Activated CD8-positive, alpha-beta T cell treated with anti-CD3 and anti-CD28 coated beads for 36 hours (primary cell): ENCODE measurements at regions of chr15 and their contacts with region 1.

Region 1: GRCh38 chr15:89358755-89359439 is 24.3 kb upstream of the POLG start:
- DNase-seq: peak; percentile 85
- ATAC-seq: peak; percentile 93
- H3K4me3 Mint-ChIP-seq: peak overlapping the region; percentile 75
- H3K27ac Mint-ChIP-seq: no peak overlapping the region
- H3K4me1 Mint-ChIP-seq: peaks cover 3% of the 10 kb centered on the region
- H3K27me3 Mint-ChIP-seq: peaks cover 75% of the 10 kb centered on the region
- CTCF ChIP-seq: peak; percentile 97

Region 2: DNA sequence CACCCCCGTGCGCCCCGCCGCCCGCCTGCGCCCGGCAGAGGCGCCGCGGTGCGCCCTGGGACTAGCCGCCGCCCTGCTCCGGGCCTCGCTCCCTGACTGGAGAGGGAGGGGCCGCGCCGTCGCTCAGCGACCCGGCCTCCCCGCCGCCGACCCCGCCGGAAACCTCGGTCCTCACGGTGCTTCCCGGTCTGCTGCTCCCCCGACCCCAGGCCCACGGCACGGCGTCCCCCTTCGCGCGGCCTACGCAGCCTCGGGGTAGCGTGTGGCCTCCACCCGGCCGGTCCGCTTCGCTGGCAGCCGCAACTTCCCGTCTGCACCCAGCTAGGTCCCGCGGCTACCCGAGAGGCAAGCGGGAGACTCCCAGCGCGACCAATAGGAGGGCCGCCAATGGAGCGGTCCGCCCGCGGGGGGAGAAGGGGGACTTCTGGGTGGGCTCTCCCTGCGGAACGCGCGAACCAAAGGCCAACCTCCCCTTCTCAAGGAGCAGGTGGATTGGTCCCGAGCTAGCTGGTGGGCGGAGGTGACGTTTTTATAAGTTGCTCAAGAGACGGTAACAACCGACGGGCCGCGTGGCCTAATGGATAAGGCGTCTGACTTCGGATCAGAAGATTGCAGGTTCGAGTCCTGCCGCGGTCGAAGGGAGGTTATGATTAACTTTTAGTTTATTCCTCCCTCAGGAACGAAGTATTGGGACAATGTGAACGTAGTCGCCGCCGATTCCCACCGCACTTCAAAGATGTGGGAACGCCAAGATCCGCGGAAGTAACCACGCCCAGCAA is 24.2 kb before region 1 on chr15 and contains the start of gene POLG:
- CTCF ChIA-PET with region 1: interaction called, 116 read pairs
- POLR2A ChIA-PET with region 1: interaction called, 3 read pairs
- intact Hi-C with region 1: no loop called
- DNase-seq: peak; percentile 98
- ATAC-seq: peak; percentile 93
- H3K4me3 Mint-ChIP-seq: peak within 1 kb of the TSS; percentile 78
- H3K27ac Mint-ChIP-seq: peak within 1 kb of the TSS; percentile 80
- H3K4me1 Mint-ChIP-seq: peaks cover 60% of the 10 kb centered on the region
- H3K27me3 Mint-ChIP-seq: peaks cover 2% of the 10 kb centered on the region
- CTCF ChIP-seq: no peak
- total RNA-seq, gene POLG: 101 to 106 TPM

Region 3: GRCh38 chr15:89383365-89384175 is 24.7 kb after region 1 on chr15:
- CTCF ChIA-PET with region 1: interaction called, 165 read pairs
- POLR2A ChIA-PET with region 1: interaction called, 8 read pairs
- intact Hi-C with region 1: no loop called
- DNase-seq: no peak
- ATAC-seq: no peak
- H3K4me3 Mint-ChIP-seq: no peak overlapping the region
- H3K27ac Mint-ChIP-seq: no peak overlapping the region
- H3K4me1 Mint-ChIP-seq: peaks cover 2% of the 10 kb centered on the region
- H3K27me3 Mint-ChIP-seq: peaks cover 31% of the 10 kb centered on the region
- CTCF ChIP-seq: no peak

Region 4: GRCh38 chr15:89430530-89431341 is 71.8 kb after region 1 on chr15:
- CTCF ChIA-PET with region 1: interaction called, 185 read pairs
- POLR2A ChIA-PET with region 1: interaction called, 3 read pairs
- intact Hi-C with region 1: loop called (anchors 2 kb)
- DNase-seq: peak; percentile 93
- ATAC-seq: peak; percentile 99
- H3K4me3 Mint-ChIP-seq: peak overlapping the region; percentile 72
- H3K27ac Mint-ChIP-seq: peak overlapping the region; percentile 27
- H3K4me1 Mint-ChIP-seq: peaks cover 8% of the 10 kb centered on the region
- H3K27me3 Mint-ChIP-seq: peaks cover 32% of the 10 kb centered on the region
- CTCF ChIP-seq: peak; percentile 96

Region 5: DNA sequence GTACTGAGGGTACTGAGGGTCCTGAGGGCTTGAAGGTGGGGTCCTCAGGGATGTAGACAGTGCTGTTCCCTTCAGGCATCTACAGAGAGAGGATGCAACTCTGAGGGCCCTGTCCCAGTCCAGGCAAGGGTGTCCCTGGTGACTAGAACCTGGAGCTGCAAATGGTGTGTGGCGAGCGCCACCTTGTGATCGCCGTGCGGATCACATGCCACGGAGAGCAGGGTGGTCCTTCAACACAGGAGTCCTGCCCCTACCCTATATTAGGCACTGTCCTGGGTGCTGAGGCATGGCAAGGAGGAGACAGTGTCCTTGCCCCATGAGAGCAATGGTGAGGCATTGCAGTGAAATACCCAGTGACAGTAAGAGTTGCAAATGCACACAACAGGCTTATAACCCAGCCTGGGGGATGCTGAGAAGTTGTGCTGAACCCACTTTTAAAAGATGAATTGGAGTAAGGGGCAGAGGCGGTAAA is 113.9 kb after region 1 on chr15:
- CTCF ChIA-PET with region 1: interaction called, 50 read pairs
- POLR2A ChIA-PET with region 1: no interaction called
- intact Hi-C with region 1: loop called (anchors 5 kb)
- DNase-seq: peak; percentile 71
- ATAC-seq: peak; percentile 85
- H3K4me3 Mint-ChIP-seq: no peak overlapping the region
- H3K27ac Mint-ChIP-seq: no peak overlapping the region
- H3K4me1 Mint-ChIP-seq: peaks cover 3% of the 10 kb centered on the region
- H3K27me3 Mint-ChIP-seq: peaks cover 10% of the 10 kb centered on the region
- CTCF ChIP-seq: peak; percentile 87

Region 6: DNA sequence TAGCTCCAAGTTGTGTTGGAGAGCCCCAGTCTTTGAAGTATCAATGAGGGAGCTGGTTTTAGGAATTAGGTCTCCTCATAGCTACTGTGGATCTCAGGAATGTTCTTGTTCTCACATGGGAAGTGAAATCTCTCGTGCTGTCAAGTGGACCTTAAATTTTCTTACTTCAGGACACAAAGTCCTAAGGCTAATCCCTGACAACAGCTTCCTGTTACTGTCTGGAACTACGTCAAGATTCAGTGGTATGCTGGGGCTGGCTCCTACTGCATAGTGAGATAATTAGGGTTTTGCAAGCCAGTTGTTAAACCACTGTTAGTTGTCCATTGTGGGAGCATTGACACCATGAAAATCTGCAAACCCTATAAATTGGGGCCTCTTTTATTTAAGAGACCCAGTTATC is 369.4 kb after region 1 on chr15:
- CTCF ChIA-PET with region 1: no interaction called
- POLR2A ChIA-PET with region 1: no interaction called
- intact Hi-C with region 1: no loop called
- DNase-seq: no peak
- ATAC-seq: no peak
- H3K4me3 Mint-ChIP-seq: no peak overlapping the region
- H3K27ac Mint-ChIP-seq: no peak overlapping the region
- H3K4me1 Mint-ChIP-seq: no peaks in the 10 kb centered on the region
- H3K27me3 Mint-ChIP-seq: no peaks in the 10 kb centered on the region
- CTCF ChIP-seq: no peak